Activated T-helper 2 cell treated with anti-CD3 and anti-CD28 coated beads, Interferon-gamma antibody, Interleukin-2, Interleukin-4, amounts not matched to agents 10 μg/mL and 5 μg/mL and 100 μg/mL, durations not matched to agents 14 hours and 24 hours and 36 hours (primary cell): ENCODE measurements at regions of chr21 and their contacts with region 1.

Region 1: GRCh38 chr21:25734904-25735645 is at the starts of genes ATP5PF and GABPA:
- DNase-seq: peak; percentile 97
- H3K4me3 Mint-ChIP-seq: peak within 1 kb of the TSS; percentile 99
- H3K27ac Mint-ChIP-seq: peak within 1 kb of the TSS; percentile 100
- H3K4me1 Mint-ChIP-seq: peaks cover 34% of the 10 kb centered on the region
- H3K27me3 Mint-ChIP-seq: no peaks in the 10 kb centered on the region
- total RNA-seq, gene ATP5PF: 156 and 163 TPM in 2 replicates
- total RNA-seq, gene GABPA: 22.7 and 26.3 TPM in 2 replicates

Region 2: GRCh38 chr21:25573409-25574206 is 161.5 kb before region 1 on chr21:
- intact Hi-C with region 1: no loop called
- DNase-seq: peak; percentile 38
- H3K4me3 Mint-ChIP-seq: peak overlapping the region; percentile 77
- H3K27ac Mint-ChIP-seq: peak overlapping the region; percentile 93
- H3K4me1 Mint-ChIP-seq: peaks cover 76% of the 10 kb centered on the region
- H3K27me3 Mint-ChIP-seq: no peaks in the 10 kb centered on the region

Region 3: GRCh38 chr21:25708467-25709065 is 26.5 kb before region 1 on chr21:
- intact Hi-C with region 1: loop called (anchors 2 kb)
- DNase-seq: peak; percentile 14
- H3K4me3 Mint-ChIP-seq: no peak overlapping the region
- H3K27ac Mint-ChIP-seq: no peak overlapping the region
- H3K4me1 Mint-ChIP-seq: peaks cover 1% of the 10 kb centered on the region
- H3K27me3 Mint-ChIP-seq: no peaks in the 10 kb centered on the region

Region 4: GRCh38 chr21:25750085-25750484 is 15.0 kb after region 1 on chr21:
- intact Hi-C with region 1: loop called (anchors 1 kb)
- DNase-seq: no peak
- H3K4me3 Mint-ChIP-seq: no peak overlapping the region
- H3K27ac Mint-ChIP-seq: no peak overlapping the region
- H3K4me1 Mint-ChIP-seq: peaks cover 5% of the 10 kb centered on the region
- H3K27me3 Mint-ChIP-seq: no peaks in the 10 kb centered on the region

Region 5: GRCh38 chr21:25801217-25802014 is 66.3 kb after region 1 on chr21:
- intact Hi-C with region 1: loop called (anchors 2 kb)
- DNase-seq: peak; percentile 85
- H3K4me3 Mint-ChIP-seq: no peak overlapping the region
- H3K27ac Mint-ChIP-seq: no peak overlapping the region
- H3K4me1 Mint-ChIP-seq: peaks cover 3% of the 10 kb centered on the region
- H3K27me3 Mint-ChIP-seq: peaks cover 13% of the 10 kb centered on the region

Region 6: DNA sequence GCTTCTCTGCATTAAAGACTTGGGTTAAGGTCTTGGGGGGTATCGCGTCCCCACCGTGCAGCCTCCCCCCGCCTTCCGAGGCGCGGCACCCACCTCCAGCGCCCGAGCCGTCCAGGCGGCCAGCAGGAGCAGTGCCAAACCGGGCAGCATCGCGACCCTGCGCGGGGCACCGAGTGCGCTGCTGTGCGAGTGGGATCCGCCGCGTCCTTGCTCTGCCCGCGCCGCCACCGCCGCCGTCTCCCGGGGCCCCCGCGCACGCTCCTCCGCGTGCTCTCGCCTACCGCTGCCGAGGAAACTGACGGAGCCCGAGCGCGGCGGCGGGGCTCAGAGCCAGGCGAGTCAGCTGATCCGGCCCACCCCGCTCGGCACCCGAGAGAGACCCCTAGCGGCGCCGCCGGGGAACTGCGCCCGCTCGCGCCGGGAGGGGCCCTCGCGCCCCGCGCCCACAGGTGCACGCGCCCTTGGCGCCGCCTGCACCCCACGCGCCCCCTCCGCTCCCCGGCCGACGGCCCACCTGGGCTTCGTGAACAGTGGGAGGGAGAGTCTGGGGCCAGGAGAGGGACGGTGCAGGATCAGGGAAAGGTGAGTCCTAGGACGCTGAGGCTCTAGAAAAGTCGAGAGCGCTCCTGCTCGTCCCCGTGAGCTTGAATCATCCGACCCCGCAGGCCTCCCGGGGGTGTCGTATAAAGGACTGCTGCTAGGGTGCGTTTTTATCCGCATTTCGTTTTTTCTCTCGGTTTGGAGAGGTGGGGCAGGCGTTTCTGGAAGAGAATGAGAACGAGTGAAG is 435.6 kb after region 1 on chr21 and contains the start of gene APP:
- intact Hi-C with region 1: loop called (anchors 2 kb)
- DNase-seq: peak; percentile 86
- H3K4me3 Mint-ChIP-seq: peak within 1 kb of the TSS; percentile 94
- H3K27ac Mint-ChIP-seq: peak within 1 kb of the TSS; percentile 78
- H3K4me1 Mint-ChIP-seq: peaks cover 35% of the 10 kb centered on the region
- H3K27me3 Mint-ChIP-seq: peaks cover 6% of the 10 kb centered on the region
- total RNA-seq, gene APP: 85.7 and 86.5 TPM in 2 replicates

Region 7: GRCh38 chr21:26842976-26843932 is 1108.2 kb after region 1 on chr21:
- intact Hi-C with region 1: loop called (anchors 10 kb)
- DNase-seq: peak; percentile 40
- H3K4me3 Mint-ChIP-seq: peak overlapping the region; percentile 83
- H3K27ac Mint-ChIP-seq: peak overlapping the region; percentile 67
- H3K4me1 Mint-ChIP-seq: peaks cover 45% of the 10 kb centered on the region
- H3K27me3 Mint-ChIP-seq: peaks cover 60% of the 10 kb centered on the region